A549 (cell line): ENCODE measurements at regions of chr9 and their contacts with region 1.

Region 1: DNA sequence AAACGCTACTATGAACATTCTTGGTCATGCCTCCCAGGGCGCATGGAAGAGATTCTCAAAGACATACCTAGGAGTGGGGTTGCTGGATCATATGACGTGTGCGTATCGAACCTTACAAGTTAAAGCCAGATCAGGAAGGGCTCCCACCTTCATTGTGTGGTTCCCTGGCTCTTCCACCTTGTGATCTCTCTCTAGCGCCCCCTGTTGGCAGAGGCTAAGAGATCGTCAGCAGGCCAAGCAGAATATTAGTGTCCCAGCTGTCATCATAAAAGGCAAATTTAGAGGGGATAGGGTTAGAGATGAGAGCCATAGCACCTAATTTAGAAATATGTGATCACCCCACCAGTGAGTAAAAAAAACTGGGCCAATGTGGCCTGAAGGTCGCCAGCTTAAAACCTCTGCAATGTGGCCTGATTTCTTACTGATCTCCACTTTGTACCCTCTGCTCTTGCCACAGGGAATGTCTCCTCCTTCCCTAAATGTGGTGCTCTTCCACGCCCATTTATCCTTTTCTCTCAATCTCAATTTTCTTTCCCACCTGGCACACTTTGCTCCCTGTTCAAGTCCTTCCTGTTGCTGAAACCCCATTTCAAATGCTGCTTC is 91.7 kb upstream of the SHB start:
- DNase-seq: peak; percentile 56 to 64
- ATAC-seq: peak; percentile 52 to 85; a peak in 3 of 6 replicates
- H3K4me3 ChIP-seq: no peak overlapping the region
- H3K27ac ChIP-seq: no peak overlapping the region
- H3K4me1 ChIP-seq: no peaks in the 10 kb centered on the region
- CTCF ChIP-seq: peak; percentile 73
- EP300 ChIP-seq: no peak
- POLR2A ChIP-seq: no peak
- RAD21 ChIP-seq: peak; percentile 57 to 63

Region 2: DNA sequence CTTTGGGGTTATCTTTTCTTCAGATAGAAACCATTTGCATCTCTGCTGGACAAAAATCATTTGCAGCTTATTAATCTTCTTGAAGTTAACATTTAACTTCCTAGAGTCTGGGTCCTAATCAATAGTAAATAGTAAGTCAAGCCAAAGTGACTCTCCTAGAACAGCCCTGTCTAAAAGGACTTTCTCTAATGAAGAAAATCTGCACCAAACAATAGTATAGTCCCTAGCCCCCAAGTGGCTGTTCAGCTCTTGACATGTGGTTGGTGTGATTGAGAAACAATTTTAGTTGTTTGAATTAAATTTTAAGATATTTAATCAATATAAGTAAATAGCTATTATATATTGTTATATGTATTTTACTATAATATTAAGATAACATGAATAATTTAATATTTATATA is 27.1 kb before region 1 on chr9:
- CTCF ChIA-PET with region 1: interaction called, 15 read pairs
- POLR2A ChIA-PET with region 1: no interaction called
- DNase-seq: no peak
- ATAC-seq: no peak
- H3K4me3 ChIP-seq: no peak overlapping the region
- H3K27ac ChIP-seq: no peak overlapping the region
- H3K4me1 ChIP-seq: no peaks in the 10 kb centered on the region
- CTCF ChIP-seq: no peak
- EP300 ChIP-seq: no peak
- POLR2A ChIP-seq: no peak
- RAD21 ChIP-seq: no peak

Region 3: DNA sequence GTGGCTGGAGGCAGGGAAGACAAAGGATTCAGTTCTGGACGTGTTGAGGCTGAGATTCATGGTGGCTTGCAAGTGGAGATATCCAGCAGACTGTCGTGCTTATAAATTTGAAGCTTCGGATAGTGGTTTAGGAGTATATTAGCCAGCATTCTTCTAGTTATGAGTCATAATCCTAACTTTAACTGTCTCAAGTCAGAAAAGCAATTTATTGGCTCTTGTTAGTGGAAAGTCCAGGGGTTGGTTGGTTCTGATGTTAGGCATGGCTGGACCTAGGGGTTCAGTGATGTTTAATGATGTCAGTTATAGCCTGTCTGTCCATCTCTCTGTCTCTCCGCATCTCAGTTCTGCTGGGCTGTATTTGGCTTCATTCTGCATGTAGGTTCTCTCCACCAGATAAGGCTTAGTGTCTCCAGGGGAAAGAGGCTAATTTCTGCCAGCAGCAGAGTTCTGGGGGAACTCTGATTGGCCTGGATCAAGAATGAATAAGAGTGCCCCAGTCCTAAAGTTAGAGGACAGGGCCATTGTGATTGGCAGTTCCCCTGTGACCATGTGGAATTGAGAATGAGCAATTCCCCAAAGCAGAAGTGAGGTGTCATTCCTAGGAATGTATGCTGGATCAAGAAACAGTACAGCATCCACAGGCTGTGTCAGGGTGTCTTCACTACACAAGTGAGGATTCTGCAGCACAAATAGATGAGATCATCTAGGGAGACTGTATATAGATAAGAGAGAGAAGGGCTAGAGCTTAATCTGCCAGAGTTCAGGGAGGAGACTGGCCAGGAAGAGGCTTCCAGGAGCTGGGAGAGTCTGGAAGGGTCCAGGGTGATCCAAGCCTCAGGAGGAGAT is 18.7 kb before region 1 on chr9:
- CTCF ChIA-PET with region 1: interaction called, 34 read pairs
- POLR2A ChIA-PET with region 1: no interaction called
- DNase-seq: peak in 1 of 2 experiments; percentile 22
- ATAC-seq: peak; percentile 51 to 74; a peak in 5 of 6 replicates
- H3K4me3 ChIP-seq: no peak overlapping the region
- H3K27ac ChIP-seq: peak overlapping the region in 1 of 2 experiments; percentile 30; a peak in 3 of 6 replicates
- H3K4me1 ChIP-seq: peaks cover 18% of the 10 kb centered on the region
- CTCF ChIP-seq: no peak
- EP300 ChIP-seq: no peak
- POLR2A ChIP-seq: no peak
- RAD21 ChIP-seq: no peak

Region 4: DNA sequence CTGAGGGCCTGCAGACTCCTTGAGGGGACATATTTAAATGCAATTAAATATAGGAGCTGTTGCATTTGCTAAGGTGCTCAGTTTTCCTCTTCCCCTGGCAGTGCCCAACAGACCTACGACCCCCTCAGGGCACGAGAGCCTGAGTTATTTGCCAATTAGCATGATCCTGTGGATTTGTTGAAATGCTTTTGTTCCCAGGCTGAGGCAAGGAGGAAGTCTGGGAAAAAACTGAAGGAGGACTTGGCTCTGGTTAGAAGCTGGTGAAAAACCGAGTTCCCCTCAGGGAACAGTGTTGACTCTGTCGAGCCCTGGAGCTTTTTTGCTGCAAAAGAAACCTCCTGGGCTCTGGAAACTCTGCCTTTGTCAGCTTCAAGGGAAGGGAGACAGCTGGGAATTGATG is 11.9 kb after region 1 on chr9:
- CTCF ChIA-PET with region 1: interaction called, 30 read pairs
- POLR2A ChIA-PET with region 1: no interaction called
- DNase-seq: no peak
- ATAC-seq: no peak
- H3K4me3 ChIP-seq: no peak overlapping the region
- H3K27ac ChIP-seq: peak overlapping the region; percentile 26 to 85; a peak in 5 of 6 replicates
- H3K4me1 ChIP-seq: 0 out of 3 replicates have a peak, but pooled peaks cover 4% of the 10 kb centered on the region
- CTCF ChIP-seq: no peak
- EP300 ChIP-seq: no peak
- POLR2A ChIP-seq: no peak
- RAD21 ChIP-seq: no peak

Region 5: GRCh38 chr9:38254151-38254550 is 93.4 kb after region 1 on chr9:
- CTCF ChIA-PET with region 1: no interaction called
- POLR2A ChIA-PET with region 1: no interaction called
- DNase-seq: no peak
- ATAC-seq: no peak
- H3K4me3 ChIP-seq: no peak overlapping the region
- H3K27ac ChIP-seq: no peak overlapping the region
- H3K4me1 ChIP-seq: no peaks in the 10 kb centered on the region
- CTCF ChIP-seq: no peak
- EP300 ChIP-seq: no peak
- POLR2A ChIP-seq: no peak
- RAD21 ChIP-seq: no peak